Panc1 (cell line): ENCODE measurements at regions of chr19 and their contacts with region 1.

Region 1: GRCh38 chr19:39792999-39793546 is 14.4 kb downstream of the LEUTX start:
- DNase-seq: peak; percentile 100
- ATAC-seq: peak; percentile 98
- H3K4me3 ChIP-seq: peak overlapping the region; percentile 29 to 42
- H3K27ac ChIP-seq: no peak overlapping the region
- H3K4me1 ChIP-seq: peaks cover 13% of the 10 kb centered on the region
- H3K27me3 ChIP-seq: peaks cover 29% of the 10 kb centered on the region
- CTCF ChIP-seq: no peak

Region 2: DNA sequence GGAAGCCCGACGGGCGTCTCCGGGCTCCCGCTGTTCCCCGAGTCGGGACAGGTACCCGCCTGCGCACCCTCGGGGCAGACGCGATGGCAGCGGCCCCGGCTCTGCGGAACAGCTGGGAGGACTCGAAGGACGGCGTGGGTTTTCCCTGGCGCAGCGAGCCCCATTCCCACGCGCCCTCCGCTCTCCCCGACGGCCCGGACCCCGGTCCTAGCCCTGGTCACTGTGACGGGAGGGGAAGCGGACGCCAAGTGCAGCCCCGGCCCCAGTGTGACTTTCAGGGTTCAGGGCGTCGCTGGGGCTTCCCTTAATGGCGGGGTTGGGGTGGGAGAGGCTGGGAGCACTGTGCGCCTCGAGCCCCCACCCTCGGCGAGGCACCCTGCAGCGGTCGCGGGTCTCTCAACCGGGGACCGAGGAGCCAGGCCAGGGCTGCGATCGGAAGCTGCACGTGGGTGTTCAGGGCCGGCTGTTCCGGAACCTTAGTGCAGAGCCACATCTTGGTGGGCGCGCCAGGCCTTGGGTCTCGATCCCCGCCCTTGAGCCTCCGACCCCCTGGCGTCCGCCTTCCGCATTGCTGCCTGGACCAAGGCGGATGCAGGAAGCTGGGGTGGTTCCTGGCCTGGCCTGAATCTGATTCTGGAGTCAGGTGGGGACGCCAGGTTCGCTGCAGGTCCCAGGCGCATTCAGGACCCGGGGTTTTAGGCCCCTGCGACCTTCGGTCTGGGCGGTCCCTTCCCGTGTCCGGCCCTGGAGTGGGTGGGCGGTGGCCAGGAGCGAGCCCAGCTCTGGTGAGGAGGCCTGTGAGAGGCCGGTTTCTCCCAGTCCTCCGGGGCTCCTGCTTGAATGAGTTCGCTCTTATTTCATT is 1000.6 kb before region 1 on chr19:
- CTCF ChIA-PET with region 1: no interaction called
- POLR2A ChIA-PET with region 1: interaction called, 10 read pairs
- in situ Hi-C with region 1: loop called (anchors 25 kb)
- intact Hi-C with region 1: no loop called
- DNase-seq: no peak
- ATAC-seq: no peak
- H3K4me3 ChIP-seq: no peak overlapping the region
- H3K27ac ChIP-seq: peak overlapping the region; percentile 15; the same call in 1 of the 2 replicates
- H3K4me1 ChIP-seq: peaks cover 6% of the 10 kb centered on the region; the same call in 1 of the 2 replicates
- H3K27me3 ChIP-seq: no peaks in the 10 kb centered on the region
- CTCF ChIP-seq: no peak

Region 3: DNA sequence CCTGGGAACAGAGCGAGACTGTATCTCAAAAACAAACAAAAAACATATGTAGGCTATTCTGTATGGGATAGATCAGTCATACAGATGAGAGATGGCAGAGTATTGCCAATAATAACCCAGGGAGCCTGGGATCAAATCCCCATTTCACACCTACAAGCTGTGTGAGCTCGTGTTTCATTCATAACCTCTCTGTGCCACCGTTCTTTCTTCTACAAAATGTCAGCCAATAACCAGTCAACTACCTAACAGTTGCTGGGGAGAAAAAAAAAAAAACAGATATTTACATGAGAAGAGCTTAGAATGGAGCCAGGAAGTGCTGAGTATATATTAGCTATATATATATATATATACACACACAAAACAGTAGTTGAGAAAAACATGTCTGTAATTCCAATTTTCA is 531.4 kb before region 1 on chr19:
- CTCF ChIA-PET with region 1: no interaction called
- POLR2A ChIA-PET with region 1: no interaction called
- in situ Hi-C with region 1: no loop called
- intact Hi-C with region 1: no loop called
- DNase-seq: no peak
- ATAC-seq: no peak
- H3K4me3 ChIP-seq: no peak overlapping the region
- H3K27ac ChIP-seq: no peak overlapping the region
- H3K4me1 ChIP-seq: no peaks in the 10 kb centered on the region
- H3K27me3 ChIP-seq: peaks cover 9% of the 10 kb centered on the region
- CTCF ChIP-seq: no peak

Region 4: DNA sequence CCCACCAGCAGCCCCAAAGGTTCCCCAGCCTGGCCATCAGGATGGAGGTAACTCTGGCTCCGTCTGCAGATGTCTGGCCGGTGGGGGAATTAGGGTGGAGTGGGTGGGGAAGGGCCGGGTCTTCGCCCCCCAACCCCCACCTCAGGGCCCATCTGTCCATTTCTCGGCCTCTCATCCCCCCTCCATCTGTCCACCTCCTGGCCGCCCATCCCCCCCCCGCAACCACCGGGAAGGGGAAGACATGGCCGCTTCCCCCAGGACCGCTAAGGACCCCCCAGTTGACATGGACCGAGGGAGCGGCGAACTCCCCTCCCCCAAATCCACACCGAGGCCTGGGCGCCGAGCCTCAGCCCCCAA is 473.2 kb before region 1 on chr19:
- CTCF ChIA-PET with region 1: interaction called, 34 read pairs
- POLR2A ChIA-PET with region 1: interaction called, 3 read pairs
- in situ Hi-C with region 1: no loop called
- intact Hi-C with region 1: no loop called
- DNase-seq: no peak
- ATAC-seq: no peak
- H3K4me3 ChIP-seq: peak overlapping the region; percentile 34 to 56
- H3K27ac ChIP-seq: no peak overlapping the region; the same call in 1 of the 2 replicates
- H3K4me1 ChIP-seq: peaks cover 4% of the 10 kb centered on the region
- H3K27me3 ChIP-seq: peaks cover 6% of the 10 kb centered on the region
- CTCF ChIP-seq: no peak

Region 5: DNA sequence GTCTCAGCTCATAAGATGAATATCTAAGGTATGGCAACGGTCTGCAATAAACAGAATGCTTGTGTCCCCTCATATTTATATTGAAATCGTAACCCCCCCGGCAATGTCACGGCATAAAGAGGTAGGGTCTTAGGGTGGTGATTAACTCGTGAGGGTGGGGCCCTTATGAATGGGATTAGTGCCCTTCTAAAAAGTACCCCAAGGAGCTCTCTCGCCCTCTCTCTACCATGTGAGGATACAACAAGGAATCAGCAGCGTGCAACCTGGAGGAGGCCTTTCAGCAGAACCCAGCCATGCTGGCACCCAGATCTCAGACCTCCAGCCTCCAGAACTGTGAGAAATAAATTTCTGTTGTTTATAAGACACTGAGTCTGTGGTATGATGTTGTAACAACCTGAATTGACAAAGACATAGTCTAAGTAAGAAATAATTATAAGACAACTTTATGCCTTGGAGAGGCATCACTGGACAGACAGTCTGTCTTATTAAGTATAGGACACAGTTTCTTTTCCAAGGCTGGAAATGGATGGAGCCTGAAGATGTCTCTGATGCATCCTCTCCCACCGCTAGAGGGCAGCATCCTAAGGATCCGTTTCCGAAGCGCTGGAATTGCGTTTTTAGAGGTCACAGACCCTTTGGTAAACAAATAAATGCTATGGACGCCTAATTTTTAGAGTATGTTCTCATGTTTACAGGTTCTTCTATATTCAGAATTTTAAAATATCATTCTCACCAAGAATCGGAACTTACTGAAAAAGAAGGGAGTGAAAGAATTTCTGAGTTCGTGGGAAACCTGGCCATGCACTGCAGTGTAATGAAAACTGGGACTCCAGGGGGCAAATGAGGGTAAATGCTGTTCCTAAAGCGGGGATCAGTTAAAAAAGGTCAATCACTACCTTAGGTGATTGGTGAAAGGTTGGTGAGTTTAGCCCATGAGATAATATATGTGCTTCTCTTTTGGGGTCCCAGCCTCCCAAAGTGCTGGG is 27.7 kb before region 1 on chr19:
- CTCF ChIA-PET with region 1: interaction called, 273 read pairs
- POLR2A ChIA-PET with region 1: interaction called, 15 read pairs
- in situ Hi-C with region 1: no loop called
- intact Hi-C with region 1: no loop called
- DNase-seq: peak; percentile 89
- ATAC-seq: peak; percentile 76
- H3K4me3 ChIP-seq: no peak overlapping the region
- H3K27ac ChIP-seq: no peak overlapping the region
- H3K4me1 ChIP-seq: no peaks in the 10 kb centered on the region
- H3K27me3 ChIP-seq: peaks cover 42% of the 10 kb centered on the region
- CTCF ChIP-seq: no peak

Region 6: DNA sequence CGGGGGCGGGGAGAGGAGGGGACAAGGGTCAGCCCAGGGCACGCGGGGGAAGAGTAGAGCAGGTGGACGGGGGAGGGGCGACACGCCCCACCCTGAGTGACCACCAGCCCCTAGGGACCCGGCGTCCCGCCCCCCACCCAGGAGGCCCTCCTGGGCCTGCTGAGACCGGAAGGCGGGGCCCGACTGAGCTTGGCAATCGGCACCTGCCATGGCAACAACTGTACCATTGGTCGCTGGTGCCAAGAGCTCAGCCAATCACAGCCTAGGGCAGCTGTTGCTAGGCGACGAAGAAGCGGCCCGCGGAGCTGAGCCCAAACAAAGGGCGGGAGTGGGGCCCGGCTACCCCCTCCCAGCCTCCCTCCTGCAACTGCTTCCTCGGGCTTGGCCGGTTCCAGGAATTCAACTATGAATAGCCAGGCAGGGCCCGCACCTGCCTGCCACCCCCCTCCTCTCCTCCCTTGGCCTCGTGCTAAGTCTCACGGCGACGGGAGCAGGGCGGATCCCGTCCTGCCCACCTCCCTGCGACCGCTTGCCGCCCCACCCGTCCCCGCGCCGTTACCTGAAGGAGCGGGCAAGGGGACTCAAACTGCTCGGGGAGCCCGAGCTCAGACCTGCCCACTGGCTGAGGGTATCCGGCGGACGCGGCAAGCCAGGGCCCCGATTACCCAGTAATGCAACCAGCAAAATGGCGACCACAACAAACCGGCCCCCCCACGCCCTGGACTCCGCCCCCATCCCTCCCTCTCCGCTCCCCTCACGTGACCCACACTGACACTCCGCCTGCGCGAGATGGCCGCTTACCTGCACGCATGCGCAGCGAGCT is 40.6 kb after region 1 on chr19 and contains the start of gene DYRK1B:
- CTCF ChIA-PET with region 1: interaction called, 49 read pairs
- POLR2A ChIA-PET with region 1: interaction called, 47 read pairs
- in situ Hi-C with region 1: no loop called
- intact Hi-C with region 1: no loop called
- DNase-seq: peak; percentile 100
- ATAC-seq: peak; percentile 94
- H3K4me3 ChIP-seq: peak within 1 kb of the TSS; percentile 36 to 57
- H3K27ac ChIP-seq: peak within 1 kb of the TSS; percentile 76
- H3K4me1 ChIP-seq: peaks cover 26% of the 10 kb centered on the region
- H3K27me3 ChIP-seq: no peaks in the 10 kb centered on the region
- CTCF ChIP-seq: no peak
- total RNA-seq, gene DYRK1B: 322 TPM

Region 7: GRCh38 chr19:39970675-39971379 is 177.8 kb after region 1 on chr19 and contains the start of gene PSMC4:
- CTCF ChIA-PET with region 1: interaction called, 149 read pairs
- POLR2A ChIA-PET with region 1: interaction called, 21 read pairs
- in situ Hi-C with region 1: no loop called
- intact Hi-C with region 1: loop called (anchors 1 kb)
- DNase-seq: peak; percentile 100
- ATAC-seq: peak; percentile 98
- H3K4me3 ChIP-seq: peak within 1 kb of the TSS; percentile 35 to 50
- H3K27ac ChIP-seq: peak within 1 kb of the TSS; percentile 82
- H3K4me1 ChIP-seq: peaks cover 17% of the 10 kb centered on the region
- H3K27me3 ChIP-seq: no peaks in the 10 kb centered on the region
- CTCF ChIP-seq: no peak
- total RNA-seq, gene PSMC4: 2,386 TPM

Region 8: GRCh38 chr19:40110570-40110969 is 317.5 kb after region 1 on chr19:
- CTCF ChIA-PET with region 1: no interaction called
- POLR2A ChIA-PET with region 1: no interaction called
- in situ Hi-C with region 1: no loop called
- intact Hi-C with region 1: no loop called
- DNase-seq: no peak
- ATAC-seq: peak; percentile 41
- H3K4me3 ChIP-seq: no peak overlapping the region
- H3K27ac ChIP-seq: no peak overlapping the region
- H3K4me1 ChIP-seq: no peaks in the 10 kb centered on the region
- H3K27me3 ChIP-seq: no peaks in the 10 kb centered on the region; the same call in 1 of the 2 replicates
- CTCF ChIP-seq: no peak